ENCODE measurements at regions of chr1 and their contacts with region 1.

Region 1: GRCh38 chr1:181424786-181425403 is 58.4 kb upstream of the CACNA1E start:
- DNase-seq: peak; percentile 59 to 88 (median 75)
- ATAC-seq: peak; percentile 73
- H3K4me3 ChIP-seq: no peak overlapping the region
- H3K4me3 Mint-ChIP-seq: peak overlapping the region; percentile 75
- H3K27ac ChIP-seq: no peak overlapping the region
- H3K27ac Mint-ChIP-seq: no peak overlapping the region
- H3K4me1 ChIP-seq: no peaks in the 10 kb centered on the region
- H3K4me1 Mint-ChIP-seq: peaks cover 4% of the 10 kb centered on the region
- H3K27me3 ChIP-seq: peaks cover 0 to 4% of the 10 kb centered on the region in 2 experiments
- H3K27me3 Mint-ChIP-seq: peaks cover 19% of the 10 kb centered on the region
- CTCF ChIP-seq: peak; percentile 99

Region 2: DNA sequence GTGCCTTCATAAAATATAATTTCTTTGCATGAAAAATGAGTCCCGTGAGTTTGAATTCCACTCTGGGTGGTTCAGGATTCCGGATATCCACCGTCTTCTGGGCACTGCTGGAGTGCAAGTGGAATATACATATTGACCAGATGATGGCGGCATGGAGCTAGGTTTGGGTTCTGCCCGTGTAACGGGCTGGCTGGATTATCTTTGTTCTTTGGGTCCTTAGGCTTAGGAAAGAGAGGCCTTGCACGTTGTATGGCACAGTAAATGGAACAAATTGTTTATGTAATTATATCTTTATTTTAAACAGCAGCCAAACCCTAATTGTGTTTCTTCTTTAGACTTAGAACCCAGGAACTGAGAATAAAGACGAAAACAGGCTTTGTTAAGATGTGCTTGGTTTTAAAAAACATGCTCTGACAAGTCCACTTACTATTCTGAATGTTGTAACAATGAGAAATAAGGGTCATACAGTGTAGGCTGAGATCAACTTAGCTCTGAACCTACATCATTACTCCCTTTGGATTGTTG is 909.0 kb before region 1 on chr1:
- CTCF ChIA-PET with region 1: interaction called, 3 read pairs
- POLR2A ChIA-PET with region 1: no interaction called
- intact Hi-C with region 1: loop called in 1 of 2 experiments (anchors 10 kb)
- DNase-seq: peak; percentile 10 to 76 (median 51)
- ATAC-seq: peak; percentile 95
- H3K4me3 ChIP-seq: no peak overlapping the region
- H3K4me3 Mint-ChIP-seq: no peak overlapping the region
- H3K27ac ChIP-seq: no peak overlapping the region
- H3K27ac Mint-ChIP-seq: no peak overlapping the region
- H3K4me1 ChIP-seq: no peaks in the 10 kb centered on the region
- H3K4me1 Mint-ChIP-seq: peaks cover 2% of the 10 kb centered on the region
- H3K27me3 ChIP-seq: no peaks in the 10 kb centered on the region
- H3K27me3 Mint-ChIP-seq: peaks cover 15% of the 10 kb centered on the region
- CTCF ChIP-seq: peak; percentile 93

Region 3: GRCh38 chr1:181033799-181034451 is 391.0 kb before region 1 on chr1 and contains the start of gene MR1:
- CTCF ChIA-PET with region 1: no interaction called
- POLR2A ChIA-PET with region 1: no interaction called
- intact Hi-C with region 1: loop called in 1 of 2 experiments (anchors 10 kb)
- DNase-seq: peak in 7 of 9 experiments; percentile 16 to 93 (median 48)
- ATAC-seq: peak; percentile 97
- H3K4me3 ChIP-seq: peak within 1 kb of the TSS; percentile 66 to 76
- H3K4me3 Mint-ChIP-seq: peak within 1 kb of the TSS; percentile 96
- H3K27ac ChIP-seq: peak within 1 kb of the TSS; percentile 85 to 99
- H3K27ac Mint-ChIP-seq: peak within 1 kb of the TSS; percentile 99
- H3K4me1 ChIP-seq: peaks cover 39% of the 10 kb centered on the region
- H3K4me1 Mint-ChIP-seq: peaks cover 55% of the 10 kb centered on the region
- H3K27me3 ChIP-seq: no peaks in the 10 kb centered on the region
- H3K27me3 Mint-ChIP-seq: no peaks in the 10 kb centered on the region
- CTCF ChIP-seq: no peak
- total RNA-seq, gene MR1: 15.4 to 16.0 TPM

Region 4: DNA sequence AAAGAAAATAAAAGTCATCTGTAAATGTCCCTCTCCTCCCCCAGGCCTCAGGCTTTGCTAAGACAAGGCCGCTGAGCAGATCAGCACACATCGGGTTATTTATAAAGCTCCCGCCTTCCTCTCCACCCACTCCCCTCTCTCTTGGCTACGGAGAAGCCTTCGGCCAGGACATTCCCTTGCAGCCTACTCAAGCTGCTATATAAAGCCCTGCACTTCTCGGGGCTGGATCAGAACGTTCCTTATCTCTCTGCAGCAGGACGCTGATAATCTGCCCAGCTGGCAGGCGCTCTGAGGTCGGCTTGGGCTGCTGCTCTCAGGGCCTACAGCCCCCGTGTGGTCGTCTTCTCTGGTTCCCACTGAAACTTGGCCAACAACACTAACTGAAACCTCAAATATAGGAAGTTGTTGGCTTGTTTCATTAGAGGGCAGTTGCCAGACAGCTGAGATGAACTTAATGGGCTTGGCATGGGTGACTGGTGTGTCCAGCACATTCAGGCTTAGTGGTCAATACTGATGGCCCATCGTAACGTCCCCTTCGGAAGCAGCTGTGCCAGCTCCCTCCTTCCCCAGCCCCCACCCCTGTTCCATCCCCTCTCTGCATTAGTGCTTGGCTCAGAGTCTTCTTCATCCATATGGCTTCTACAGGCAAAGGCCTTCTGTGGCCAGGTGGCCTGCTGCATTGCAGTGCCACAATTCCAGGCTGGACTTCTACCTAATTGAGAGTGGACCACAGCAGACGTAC is 271.8 kb before region 1 on chr1:
- CTCF ChIA-PET with region 1: interaction called, 4 read pairs
- POLR2A ChIA-PET with region 1: no interaction called
- intact Hi-C with region 1: loop called in 1 of 2 experiments (anchors 1 kb)
- DNase-seq: peak in 1 of 9 experiments; percentile 22
- ATAC-seq: no peak
- H3K4me3 ChIP-seq: no peak overlapping the region
- H3K4me3 Mint-ChIP-seq: no peak overlapping the region
- H3K27ac ChIP-seq: no peak overlapping the region
- H3K27ac Mint-ChIP-seq: no peak overlapping the region
- H3K4me1 ChIP-seq: peaks cover 49% of the 10 kb centered on the region
- H3K4me1 Mint-ChIP-seq: peaks cover 48% of the 10 kb centered on the region
- H3K27me3 ChIP-seq: no peaks in the 10 kb centered on the region
- H3K27me3 Mint-ChIP-seq: no peaks in the 10 kb centered on the region
- CTCF ChIP-seq: no peak

Region 5: GRCh38 chr1:181318022-181318857 is 106.7 kb before region 1 on chr1:
- CTCF ChIA-PET with region 1: interaction called, 10 read pairs
- POLR2A ChIA-PET with region 1: no interaction called
- intact Hi-C with region 1: loop called (anchors 2 to 5 kb)
- DNase-seq: peak in 2 of 9 experiments; percentile 16 to 27
- ATAC-seq: peak; percentile 40
- H3K4me3 ChIP-seq: peak overlapping the region in 1 of 2 experiments; percentile 46
- H3K4me3 Mint-ChIP-seq: peak overlapping the region; percentile 80
- H3K27ac ChIP-seq: no peak overlapping the region
- H3K27ac Mint-ChIP-seq: no peak overlapping the region
- H3K4me1 ChIP-seq: peaks cover 19% of the 10 kb centered on the region
- H3K4me1 Mint-ChIP-seq: peaks cover 24% of the 10 kb centered on the region
- H3K27me3 ChIP-seq: peaks cover 13 to 23% of the 10 kb centered on the region in 2 experiments
- H3K27me3 Mint-ChIP-seq: peaks cover 57% of the 10 kb centered on the region
- CTCF ChIP-seq: no peak

Region 6: GRCh38 chr1:181383702-181384101 is 41.2 kb before region 1 on chr1:
- CTCF ChIA-PET with region 1: interaction called, 3 read pairs
- POLR2A ChIA-PET with region 1: no interaction called
- intact Hi-C with region 1: loop called (anchors 5 kb)
- DNase-seq: no peak
- ATAC-seq: no peak
- H3K4me3 ChIP-seq: no peak overlapping the region
- H3K4me3 Mint-ChIP-seq: no peak overlapping the region
- H3K27ac ChIP-seq: no peak overlapping the region
- H3K27ac Mint-ChIP-seq: no peak overlapping the region
- H3K4me1 ChIP-seq: no peaks in the 10 kb centered on the region
- H3K4me1 Mint-ChIP-seq: peaks cover 2% of the 10 kb centered on the region
- H3K27me3 ChIP-seq: no peaks in the 10 kb centered on the region
- H3K27me3 Mint-ChIP-seq: no peaks in the 10 kb centered on the region
- CTCF ChIP-seq: no peak

Region 7: GRCh38 chr1:181397845-181398244 is 27.1 kb before region 1 on chr1:
- CTCF ChIA-PET with region 1: interaction called, 13 read pairs
- POLR2A ChIA-PET with region 1: no interaction called
- intact Hi-C with region 1: loop called in 1 of 2 experiments (anchors 1 kb)
- DNase-seq: peak in 6 of 9 experiments; percentile 11 to 67 (median 40)
- ATAC-seq: peak; percentile 19
- H3K4me3 ChIP-seq: peak overlapping the region in 1 of 2 experiments; percentile 14
- H3K4me3 Mint-ChIP-seq: peak overlapping the region; percentile 63
- H3K27ac ChIP-seq: peak overlapping the region; percentile 36 to 52
- H3K27ac Mint-ChIP-seq: no peak overlapping the region
- H3K4me1 ChIP-seq: peaks cover 83% of the 10 kb centered on the region
- H3K4me1 Mint-ChIP-seq: peaks cover 38% of the 10 kb centered on the region
- H3K27me3 ChIP-seq: no peaks in the 10 kb centered on the region
- H3K27me3 Mint-ChIP-seq: no peaks in the 10 kb centered on the region
- CTCF ChIP-seq: no peak

Measured in CD8-positive, alpha-beta T cell (primary cell).